PC-9 (cell line): ENCODE measurements at regions of chr20 and their contacts with region 1.

Region 1: GRCh38 chr20:10501402-10501801 is 66.3 kb downstream of the SLX4IP start:
- DNase-seq: no peak
- H3K4me3 ChIP-seq: no peak overlapping the region
- H3K27ac ChIP-seq: no peak overlapping the region
- H3K4me1 ChIP-seq: no peaks in the 10 kb centered on the region
- H3K27me3 ChIP-seq: no peaks in the 10 kb centered on the region
- CTCF ChIP-seq: no peak

Region 2: DNA sequence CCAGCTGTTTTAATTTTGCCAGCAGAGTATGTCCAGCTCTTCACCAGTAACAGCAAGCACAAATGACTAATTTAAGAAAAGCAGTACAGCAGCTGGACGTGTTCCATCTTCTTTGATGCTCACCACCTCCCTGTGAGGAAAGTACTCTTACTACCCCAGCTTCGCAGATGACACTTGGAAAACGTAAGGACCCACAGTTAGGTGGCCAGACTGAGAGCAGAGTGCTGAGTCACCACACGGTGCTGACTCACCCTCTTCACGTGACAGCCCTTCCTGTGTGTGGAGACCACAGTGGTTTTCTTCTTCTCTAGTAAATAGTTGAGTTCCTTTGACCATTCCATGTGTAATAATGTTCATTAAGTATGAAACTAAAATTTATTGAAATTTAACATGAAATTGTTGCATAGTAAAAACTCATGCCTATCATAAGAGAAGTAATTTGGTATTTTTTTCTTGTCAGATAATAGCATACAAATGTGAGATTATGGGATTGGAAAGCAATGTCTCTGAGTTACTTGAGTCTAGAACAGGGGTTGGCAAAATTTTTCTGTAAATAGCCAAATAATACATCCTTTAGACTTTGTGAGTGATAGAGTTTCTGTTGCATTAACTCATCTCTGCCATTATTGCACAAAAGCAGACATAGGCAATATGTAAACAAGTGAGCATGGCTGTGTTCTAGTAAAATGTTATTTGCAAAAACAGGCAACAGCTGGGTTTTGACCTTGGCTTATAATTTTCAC is 10.3 kb after region 1 on chr20:
- CTCF ChIA-PET with region 1: interaction called, 19 read pairs
- POLR2A ChIA-PET with region 1: no interaction called
- intact Hi-C with region 1: no loop called
- DNase-seq: peak; percentile 82
- H3K4me3 ChIP-seq: no peak overlapping the region
- H3K27ac ChIP-seq: peak overlapping the region; percentile 82
- H3K4me1 ChIP-seq: peaks cover 17% of the 10 kb centered on the region
- H3K27me3 ChIP-seq: no peaks in the 10 kb centered on the region
- CTCF ChIP-seq: no peak